H1 (cell line): ENCODE measurements at regions of chr1 and their contacts with region 1.

Region 1: DNA sequence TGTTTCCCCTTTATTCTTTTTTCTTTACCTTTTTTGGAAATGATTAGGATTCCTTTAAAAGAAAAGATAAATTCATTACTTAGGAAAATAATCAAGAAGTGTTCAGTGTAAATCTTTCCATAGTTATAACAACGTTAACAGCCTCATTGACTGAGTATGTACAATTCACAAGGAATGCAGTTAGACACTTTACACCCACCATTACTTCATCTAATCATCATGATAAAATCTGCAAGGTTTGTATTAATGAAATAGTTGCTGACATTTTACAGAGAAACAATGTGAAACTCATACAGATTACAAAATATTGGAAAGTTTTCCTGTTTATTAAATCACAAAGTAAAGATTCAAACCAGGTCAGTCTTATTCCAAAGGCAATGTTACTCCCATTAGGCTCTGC is 59.3 kb upstream of the NEGR1 start:
- DNase-seq: no peak
- H3K4me3 ChIP-seq: no peak overlapping the region
- H3K27ac ChIP-seq: no peak overlapping the region
- H3K4me1 ChIP-seq: no peaks in the 10 kb centered on the region
- H3K27me3 ChIP-seq: no peaks in the 10 kb centered on the region
- CTCF ChIP-seq: no peak
- EP300 ChIP-seq: no peak
- POLR2A ChIP-seq: no peak
- RAD21 ChIP-seq: no peak

Region 2: GRCh38 chr1:72296481-72296880 is 45.2 kb before region 1 on chr1:
- CTCF ChIA-PET with region 1: interaction called, 22 read pairs
- POLR2A ChIA-PET with region 1: interaction called, 6 read pairs
- DNase-seq: no peak
- H3K4me3 ChIP-seq: no peak overlapping the region
- H3K27ac ChIP-seq: no peak overlapping the region
- H3K4me1 ChIP-seq: peaks cover 0 to 3% (median 0%) of the 10 kb centered on the region in 4 experiments; a peak in 3 of 7 replicates
- H3K27me3 ChIP-seq: no peaks in the 10 kb centered on the region
- CTCF ChIP-seq: no peak
- EP300 ChIP-seq: no peak
- POLR2A ChIP-seq: no peak
- RAD21 ChIP-seq: no peak

Region 3: DNA sequence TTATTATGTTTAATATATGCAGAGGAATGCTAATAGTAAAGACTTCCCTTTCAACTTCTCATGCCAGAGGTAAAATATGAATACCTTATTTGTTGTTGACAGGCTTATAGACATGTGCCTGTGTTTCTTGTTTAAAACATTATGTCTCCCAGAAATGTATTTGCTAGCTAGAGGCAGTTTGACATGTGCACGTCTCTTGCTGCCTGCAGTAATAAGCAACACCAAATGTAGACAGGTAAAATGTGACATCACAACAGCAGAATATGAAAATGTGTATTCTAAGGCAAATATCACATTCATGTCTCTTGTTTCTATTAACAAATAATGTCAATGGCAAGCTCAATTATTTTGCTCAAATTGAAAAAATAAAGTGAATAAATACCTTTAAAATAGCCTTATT is 20.9 kb after region 1 on chr1:
- CTCF ChIA-PET with region 1: no interaction called
- POLR2A ChIA-PET with region 1: no interaction called
- DNase-seq: no peak
- H3K4me3 ChIP-seq: no peak overlapping the region
- H3K27ac ChIP-seq: no peak overlapping the region
- H3K4me1 ChIP-seq: no peaks in the 10 kb centered on the region
- H3K27me3 ChIP-seq: no peaks in the 10 kb centered on the region
- CTCF ChIP-seq: no peak
- EP300 ChIP-seq: no peak
- POLR2A ChIP-seq: no peak
- RAD21 ChIP-seq: no peak